Uterus (tissue), 4 donors: ENCODE measurements at regions of chr9 and their contacts with region 1.

Region 1: GRCh38 chr9:36166101-36166927 is 2.9 kb upstream of the CCIN start:
- DNase-seq: peak; percentile 84 to 93
- H3K4me3 ChIP-seq: peak overlapping the region; percentile 44 to 49
- H3K27ac ChIP-seq: peak overlapping the region; percentile 86 to 96
- H3K4me1 ChIP-seq: peaks cover 0 to 15% of the 10 kb centered on the region in 2 donors
- H3K27me3 ChIP-seq: no peaks in the 10 kb centered on the region
- CTCF ChIP-seq: peak; percentile 84 to 96 (median 94)
- POLR2A ChIP-seq: peak; percentile 17 to 34

Region 2: DNA sequence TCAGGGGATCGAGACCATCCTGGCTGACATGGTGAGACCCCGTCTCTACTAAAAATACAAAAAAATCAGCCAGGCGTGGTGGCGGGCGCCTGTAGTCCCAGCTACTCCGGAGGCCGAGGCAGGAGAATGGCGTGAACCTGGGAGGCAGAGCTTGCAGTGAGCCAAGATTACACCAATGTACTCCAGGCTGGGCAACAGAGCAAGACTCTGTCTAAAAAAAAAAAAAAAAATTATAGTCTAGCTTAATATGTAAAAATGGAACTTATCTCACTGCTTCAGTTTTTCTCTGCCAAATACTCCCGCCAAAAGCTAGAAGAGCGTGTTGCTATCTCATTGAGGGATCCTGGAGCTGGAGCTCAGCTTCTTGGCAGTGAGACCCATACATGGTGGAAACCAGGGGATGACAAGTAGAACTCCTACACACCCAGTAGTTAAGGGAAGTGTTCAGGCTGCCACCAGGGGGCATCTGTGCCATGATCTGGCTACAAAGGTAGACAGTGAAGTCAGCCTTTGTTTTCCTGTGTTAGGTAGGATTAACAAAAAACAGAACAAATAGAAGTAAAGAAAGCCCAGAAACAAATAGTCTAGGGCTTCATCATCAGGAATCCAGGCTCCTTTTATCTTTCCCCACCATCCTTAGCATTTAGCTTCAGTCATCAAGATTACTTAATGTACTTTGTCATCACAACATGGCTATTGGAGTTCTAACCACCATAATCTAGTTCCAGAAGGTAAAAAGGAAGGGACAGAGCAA is 63.4 kb before region 1 on chr9:
- intact Hi-C with region 1: loop called (anchors 10 kb)
- DNase-seq: peak; percentile 79 to 83
- H3K4me3 ChIP-seq: no peak overlapping the region
- H3K27ac ChIP-seq: peak overlapping the region; percentile 54
- H3K4me1 ChIP-seq: no peaks in the 10 kb centered on the region
- H3K27me3 ChIP-seq: no peaks in the 10 kb centered on the region
- CTCF ChIP-seq: peak; percentile 68 to 75 (median 72)
- POLR2A ChIP-seq: no peak